ENCODE measurements at regions of chr19 and their contacts with region 1.

Region 1: GRCh38 chr19:2050991-2051772 is at the start of gene MKNK2:
- DNase-seq: peak; percentile 94
- ATAC-seq: peak; percentile 69
- H3K4me3 Mint-ChIP-seq: peak within 1 kb of the TSS; percentile 85
- H3K27ac Mint-ChIP-seq: peak within 1 kb of the TSS; percentile 93
- H3K4me1 Mint-ChIP-seq: peaks cover 58% of the 10 kb centered on the region
- H3K27me3 Mint-ChIP-seq: no peaks in the 10 kb centered on the region
- total RNA-seq, gene MKNK2: 332 to 348 TPM

Region 2: DNA sequence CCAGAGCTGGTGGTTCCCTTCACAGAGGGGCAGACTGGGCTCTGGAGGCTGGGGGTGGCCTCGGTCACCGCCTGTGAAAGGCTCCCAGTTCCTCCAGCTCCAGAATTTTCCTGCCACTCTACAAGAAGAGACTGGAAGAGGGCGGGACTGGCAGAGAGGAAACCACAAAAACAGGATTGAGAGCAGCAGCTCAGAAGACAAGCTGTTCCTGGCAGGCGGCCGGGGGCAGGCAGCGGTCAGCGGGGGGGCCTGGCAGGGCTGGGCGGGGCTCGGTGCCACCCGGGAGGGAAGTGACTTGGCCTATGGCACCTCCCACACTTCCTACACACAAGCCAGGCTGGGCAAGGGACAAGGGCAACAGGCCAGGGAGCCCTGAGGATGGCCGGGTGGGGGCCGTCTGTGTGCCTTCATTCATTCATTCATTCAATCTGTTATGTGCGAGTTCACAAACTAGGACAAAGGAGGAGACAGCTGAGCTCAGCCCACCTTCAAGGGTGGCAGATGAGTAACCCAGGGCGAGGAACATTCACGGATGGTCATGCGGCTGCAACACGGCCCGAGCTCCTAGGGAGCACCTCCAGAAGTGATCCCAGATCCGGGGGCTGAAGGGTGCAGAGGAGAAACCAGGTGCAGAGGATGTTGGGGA is 18.8 kb before region 1 on chr19:
- CTCF ChIA-PET with region 1: interaction called, 4 read pairs
- POLR2A ChIA-PET with region 1: interaction called, 12 read pairs
- DNase-seq: peak; percentile 59
- ATAC-seq: peak; percentile 51
- H3K4me3 Mint-ChIP-seq: peak overlapping the region; percentile 66
- H3K27ac Mint-ChIP-seq: peak overlapping the region; percentile 83
- H3K4me1 Mint-ChIP-seq: peaks cover 33% of the 10 kb centered on the region
- H3K27me3 Mint-ChIP-seq: no peaks in the 10 kb centered on the region

Region 3: DNA sequence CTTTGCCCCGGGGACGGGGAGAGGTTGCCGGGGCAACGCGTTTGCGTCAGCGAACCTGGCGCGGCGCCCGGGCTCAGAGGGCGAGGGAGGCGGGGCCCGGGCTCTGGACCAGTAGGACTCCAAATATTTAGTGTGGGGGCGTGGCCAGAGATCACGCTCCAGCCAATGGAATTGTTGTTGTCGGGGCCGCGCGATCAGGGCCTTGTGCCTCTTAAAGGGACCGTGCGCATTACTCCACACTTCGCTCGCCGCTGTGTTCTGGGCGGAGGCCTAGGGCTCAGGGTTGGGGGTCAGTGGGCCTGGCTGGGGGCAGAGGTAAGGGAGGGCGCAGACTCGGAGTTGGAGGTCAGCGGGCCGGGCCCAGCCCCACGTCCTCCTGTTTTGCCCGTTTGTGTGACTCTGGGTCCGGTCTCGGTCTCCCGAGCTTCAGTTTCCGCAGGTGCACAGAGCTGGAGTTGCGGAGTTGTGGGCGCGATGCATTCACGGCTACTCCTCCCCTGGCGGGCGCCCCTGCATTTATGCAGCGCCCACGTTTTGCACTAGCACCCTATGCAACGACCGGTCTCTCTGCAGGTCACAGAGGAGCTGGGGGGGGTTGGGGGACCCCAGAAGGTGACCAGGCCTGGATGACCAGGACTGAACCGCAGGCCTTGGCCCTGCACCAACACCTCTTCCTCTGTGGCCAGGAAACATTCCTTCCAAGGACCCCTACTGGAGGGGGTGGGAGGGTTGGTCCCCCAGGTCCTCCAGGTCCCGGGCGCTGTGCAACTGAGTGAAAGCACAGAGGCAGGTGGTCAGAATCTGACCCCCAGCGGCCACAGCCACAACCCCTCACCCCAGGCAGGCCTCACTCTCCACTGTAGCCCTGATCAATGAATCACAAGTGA is 10.6 kb after region 1 on chr19:
- CTCF ChIA-PET with region 1: interaction called, 11 read pairs
- POLR2A ChIA-PET with region 1: interaction called, 27 read pairs
- DNase-seq: peak; percentile 100
- ATAC-seq: peak; percentile 91
- H3K4me3 Mint-ChIP-seq: peak overlapping the region; percentile 92
- H3K27ac Mint-ChIP-seq: peak overlapping the region; percentile 92
- H3K4me1 Mint-ChIP-seq: peaks cover 42% of the 10 kb centered on the region
- H3K27me3 Mint-ChIP-seq: no peaks in the 10 kb centered on the region

Region 4: GRCh38 chr19:2084993-2085720 is 34.0 kb after region 1 on chr19:
- CTCF ChIA-PET with region 1: interaction called, 11 read pairs
- POLR2A ChIA-PET with region 1: interaction called, 14 read pairs
- DNase-seq: peak; percentile 98
- ATAC-seq: peak; percentile 63
- H3K4me3 Mint-ChIP-seq: peak overlapping the region; percentile 99
- H3K27ac Mint-ChIP-seq: peak overlapping the region; percentile 98
- H3K4me1 Mint-ChIP-seq: peaks cover 62% of the 10 kb centered on the region
- H3K27me3 Mint-ChIP-seq: no peaks in the 10 kb centered on the region